CD8-positive, alpha-beta memory T cell (primary cell): ENCODE measurements at regions of chr2 and their contacts with region 1.

Region 1: GRCh38 chr2:100262555-100263320 is 59.6 kb downstream of the LONRF2 start:
- DNase-seq: peak; percentile 21 to 54 (median 30)
- H3K4me3 ChIP-seq: no peak overlapping the region
- H3K4me3 Mint-ChIP-seq: no peak overlapping the region
- H3K27ac ChIP-seq: no peak overlapping the region
- H3K27ac Mint-ChIP-seq: no peak overlapping the region
- H3K4me1 ChIP-seq: no peaks in the 10 kb centered on the region
- H3K4me1 Mint-ChIP-seq: no peaks in the 10 kb centered on the region
- H3K27me3 ChIP-seq: no peaks in the 10 kb centered on the region
- H3K27me3 Mint-ChIP-seq: peaks cover 0 to 4% of the 10 kb centered on the region in 2 donors

Region 2: GRCh38 chr2:100193291-100193710 is 69.4 kb before region 1 on chr2:
- CTCF ChIA-PET with region 1: no interaction called
- POLR2A ChIA-PET with region 1: no interaction called
- DNase-seq: no peak
- H3K4me3 ChIP-seq: no peak overlapping the region
- H3K4me3 Mint-ChIP-seq: no peak overlapping the region
- H3K27ac ChIP-seq: no peak overlapping the region
- H3K27ac Mint-ChIP-seq: no peak overlapping the region
- H3K4me1 ChIP-seq: no peaks in the 10 kb centered on the region
- H3K4me1 Mint-ChIP-seq: no peaks in the 10 kb centered on the region
- H3K27me3 ChIP-seq: no peaks in the 10 kb centered on the region
- H3K27me3 Mint-ChIP-seq: peaks cover 7 to 11% of the 10 kb centered on the region in 2 donors

Region 3: DNA sequence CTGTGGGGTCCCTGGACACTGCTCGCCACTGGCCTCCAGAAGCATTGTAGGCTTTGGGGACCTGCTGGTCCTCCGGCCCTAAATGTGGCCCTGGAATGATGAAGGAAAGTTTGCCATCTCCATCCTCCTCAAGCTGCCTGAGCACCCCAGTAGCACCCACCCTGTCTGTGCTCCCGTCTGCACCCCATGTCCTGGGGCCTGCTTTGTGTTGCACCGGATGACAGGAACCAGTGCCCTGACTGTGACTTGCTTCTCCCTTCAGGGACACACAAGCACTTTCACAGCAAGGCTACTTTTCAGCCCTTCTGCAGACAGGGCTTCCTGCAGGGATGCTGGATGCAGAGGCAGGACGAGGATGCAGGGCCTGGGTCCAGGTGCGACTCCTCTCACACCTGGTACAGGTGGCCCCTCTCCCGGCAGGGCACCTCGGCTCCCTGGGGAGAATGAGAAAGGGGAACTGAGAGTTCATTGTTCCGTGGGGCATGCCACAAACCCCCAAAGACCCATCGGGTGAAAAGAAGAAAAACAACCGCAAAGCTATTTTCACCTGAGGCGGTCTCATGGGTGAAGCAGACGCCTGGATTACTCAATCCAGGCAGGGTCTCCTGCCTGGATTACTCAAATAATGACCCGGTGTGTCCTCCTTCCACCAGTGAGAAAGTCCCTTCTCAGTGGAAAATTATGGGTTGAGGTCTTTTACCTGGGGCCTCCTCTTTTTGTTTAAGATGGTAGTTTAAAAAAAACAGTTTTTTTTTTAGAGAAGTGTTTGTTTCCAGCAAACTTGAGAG is 15.3 kb before region 1 on chr2:
- CTCF ChIA-PET with region 1: interaction called, 13 read pairs
- POLR2A ChIA-PET with region 1: no interaction called
- DNase-seq: no peak
- H3K4me3 ChIP-seq: no peak overlapping the region
- H3K4me3 Mint-ChIP-seq: no peak overlapping the region
- H3K27ac ChIP-seq: no peak overlapping the region
- H3K27ac Mint-ChIP-seq: no peak overlapping the region
- H3K4me1 ChIP-seq: no peaks in the 10 kb centered on the region
- H3K4me1 Mint-ChIP-seq: no peaks in the 10 kb centered on the region
- H3K27me3 ChIP-seq: no peaks in the 10 kb centered on the region
- H3K27me3 Mint-ChIP-seq: peaks cover 8 to 29% of the 10 kb centered on the region in 2 donors

Region 4: GRCh38 chr2:100381240-100381639 is 118.5 kb after region 1 on chr2:
- CTCF ChIA-PET with region 1: interaction called, 33 read pairs
- POLR2A ChIA-PET with region 1: no interaction called
- DNase-seq: peak; percentile 27 to 72 (median 63)
- H3K4me3 ChIP-seq: no peak overlapping the region
- H3K4me3 Mint-ChIP-seq: no peak overlapping the region
- H3K27ac ChIP-seq: no peak overlapping the region
- H3K27ac Mint-ChIP-seq: no peak overlapping the region
- H3K4me1 ChIP-seq: no peaks in the 10 kb centered on the region
- H3K4me1 Mint-ChIP-seq: peaks cover 0 to 5% (median 2%) of the 10 kb centered on the region in 3 donors
- H3K27me3 ChIP-seq: no peaks in the 10 kb centered on the region
- H3K27me3 Mint-ChIP-seq: peaks cover 0 to 8% of the 10 kb centered on the region in 2 donors